ENCODE measurements at regions of chr9 and their contacts with region 1.

Region 1: GRCh38 chr9:128296337-128297220 is 20.5 kb downstream of the SWI5 start:
- DNase-seq: no peak

Region 2: GRCh38 chr9:127715394-127716337 is 580.9 kb before region 1 on chr9 and contains the starts of genes PTRH1 and TTC16:
- CTCF ChIA-PET with region 1: no interaction called
- POLR2A ChIA-PET with region 1: no interaction called
- DNase-seq: peak; percentile 99

Region 3: GRCh38 chr9:128341435-128341849 is 44.9 kb after region 1 on chr9:
- CTCF ChIA-PET with region 1: interaction called, 10 read pairs
- POLR2A ChIA-PET with region 1: interaction called, 4 read pairs
- DNase-seq: peak; percentile 80